Activated CD8-positive, alpha-beta memory T cell treated with anti-CD3 and anti-CD28 coated beads, Interleukin-2, amount 10 ng/mL, durations not matched to agents 7 days and 5 days (primary cell): ENCODE measurements at regions of chr16 and their contacts with region 1.

Region 1: DNA sequence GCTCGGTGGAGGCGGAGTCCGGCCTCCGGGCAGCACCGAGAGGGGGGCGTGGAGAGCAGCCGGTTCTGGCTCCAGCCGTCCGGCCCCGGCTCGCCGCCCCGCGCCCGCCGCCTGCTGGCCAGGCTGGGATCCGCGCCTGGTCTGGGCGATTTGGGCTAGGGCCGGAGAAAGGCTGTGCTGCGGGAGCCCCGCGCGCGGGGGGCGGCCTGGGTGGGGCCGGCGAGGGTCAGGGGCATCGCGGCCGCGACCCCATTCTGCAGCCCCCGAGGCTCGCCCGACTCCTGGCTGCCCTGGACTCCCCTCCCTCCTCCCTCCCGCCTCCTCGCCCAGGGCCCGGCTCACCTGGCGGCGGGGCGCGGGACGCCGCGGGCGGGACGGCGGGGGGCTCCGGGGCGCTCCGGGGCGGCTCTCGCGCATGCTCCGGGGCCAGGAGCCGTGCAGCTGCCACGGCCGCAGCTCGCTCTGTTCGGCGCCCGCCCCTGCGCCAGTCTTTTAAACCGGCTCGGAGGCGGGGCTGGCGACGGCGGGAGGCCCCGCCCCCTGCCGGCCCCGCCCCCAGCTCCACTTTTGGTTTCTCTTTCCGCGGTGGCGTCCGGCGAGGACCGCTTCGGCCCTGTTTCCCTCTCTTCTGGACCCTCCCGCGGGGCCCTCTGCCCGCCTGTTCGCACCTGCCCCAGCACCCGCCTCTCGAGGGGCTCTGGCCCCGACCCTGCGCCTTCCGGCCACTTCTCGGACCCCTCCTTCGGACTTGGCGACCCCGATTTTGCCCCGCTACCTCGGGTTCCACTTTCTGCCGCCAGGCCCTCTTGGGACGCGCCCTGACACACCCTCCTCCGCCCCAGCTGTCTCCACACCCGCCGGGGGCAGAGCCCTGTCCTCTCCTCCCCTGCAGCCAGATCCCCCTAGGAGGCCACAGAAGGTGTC is at the start of gene SOCS1:
- DNase-seq: peak; percentile 91
- ATAC-seq: peak; percentile 66
- H3K4me3 Mint-ChIP-seq: peak within 1 kb of the TSS; percentile 99
- H3K27ac Mint-ChIP-seq: peak within 1 kb of the TSS; percentile 95
- H3K4me1 Mint-ChIP-seq: peaks cover 41% of the 10 kb centered on the region
- H3K27me3 Mint-ChIP-seq: peaks cover 12% of the 10 kb centered on the region
- total RNA-seq, gene SOCS1: 158 to 200 TPM

Region 2: DNA sequence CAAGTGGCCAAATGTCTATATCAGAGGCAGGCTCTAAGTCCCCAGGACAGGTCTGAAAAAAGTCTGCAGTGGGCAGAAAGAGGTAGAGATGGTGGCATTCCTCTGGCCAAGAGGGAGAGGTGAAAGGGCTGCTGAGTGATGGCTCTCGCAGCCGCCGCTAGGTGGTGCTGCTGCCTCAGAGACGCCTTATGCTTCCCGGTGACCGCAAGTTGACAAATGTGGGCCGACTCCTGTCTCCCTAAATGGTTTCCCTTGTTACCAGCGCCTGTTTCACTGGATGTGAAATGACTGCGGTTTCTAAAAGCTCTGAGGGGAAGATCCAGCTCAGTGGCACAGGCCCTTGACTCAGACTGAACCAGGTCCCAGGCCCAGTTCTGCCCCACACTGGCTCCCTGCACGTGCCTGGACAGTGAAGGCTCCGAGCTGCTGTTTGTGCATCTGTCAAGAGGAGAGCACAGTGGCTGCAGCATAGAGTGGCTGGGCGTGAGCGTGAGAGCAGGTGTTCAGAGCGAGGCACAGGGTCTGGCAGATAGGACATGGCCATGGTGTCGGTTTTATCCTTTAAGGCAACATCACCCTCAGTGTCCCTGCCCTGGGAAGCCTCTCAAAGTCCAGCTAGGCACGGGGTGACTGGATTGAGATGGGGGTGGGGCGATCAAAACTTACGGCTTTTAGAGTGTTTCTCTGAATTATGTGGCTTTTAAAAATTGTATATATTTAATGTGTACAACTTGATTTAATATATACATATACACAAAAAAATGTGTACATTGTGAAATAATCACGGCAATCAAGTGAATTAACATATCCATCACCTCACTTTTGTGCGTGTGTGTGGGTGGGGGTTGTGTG is 291.7 kb before region 1 on chr16:
- CTCF ChIA-PET with region 1: interaction called, 257 read pairs
- DNase-seq: peak; percentile 89
- ATAC-seq: peak; percentile 63
- H3K4me3 Mint-ChIP-seq: peak overlapping the region; percentile 53
- H3K27ac Mint-ChIP-seq: peak overlapping the region; percentile 91
- H3K4me1 Mint-ChIP-seq: peaks cover 80% of the 10 kb centered on the region
- H3K27me3 Mint-ChIP-seq: no peaks in the 10 kb centered on the region

Region 3: GRCh38 chr16:11051879-11052808 is 203.9 kb before region 1 on chr16:
- CTCF ChIA-PET with region 1: interaction called, 36 read pairs
- DNase-seq: peak; percentile 97
- ATAC-seq: peak; percentile 79
- H3K4me3 Mint-ChIP-seq: peak overlapping the region; percentile 58
- H3K27ac Mint-ChIP-seq: peak overlapping the region; percentile 92
- H3K4me1 Mint-ChIP-seq: peaks cover 97% of the 10 kb centered on the region
- H3K27me3 Mint-ChIP-seq: no peaks in the 10 kb centered on the region

Region 4: DNA sequence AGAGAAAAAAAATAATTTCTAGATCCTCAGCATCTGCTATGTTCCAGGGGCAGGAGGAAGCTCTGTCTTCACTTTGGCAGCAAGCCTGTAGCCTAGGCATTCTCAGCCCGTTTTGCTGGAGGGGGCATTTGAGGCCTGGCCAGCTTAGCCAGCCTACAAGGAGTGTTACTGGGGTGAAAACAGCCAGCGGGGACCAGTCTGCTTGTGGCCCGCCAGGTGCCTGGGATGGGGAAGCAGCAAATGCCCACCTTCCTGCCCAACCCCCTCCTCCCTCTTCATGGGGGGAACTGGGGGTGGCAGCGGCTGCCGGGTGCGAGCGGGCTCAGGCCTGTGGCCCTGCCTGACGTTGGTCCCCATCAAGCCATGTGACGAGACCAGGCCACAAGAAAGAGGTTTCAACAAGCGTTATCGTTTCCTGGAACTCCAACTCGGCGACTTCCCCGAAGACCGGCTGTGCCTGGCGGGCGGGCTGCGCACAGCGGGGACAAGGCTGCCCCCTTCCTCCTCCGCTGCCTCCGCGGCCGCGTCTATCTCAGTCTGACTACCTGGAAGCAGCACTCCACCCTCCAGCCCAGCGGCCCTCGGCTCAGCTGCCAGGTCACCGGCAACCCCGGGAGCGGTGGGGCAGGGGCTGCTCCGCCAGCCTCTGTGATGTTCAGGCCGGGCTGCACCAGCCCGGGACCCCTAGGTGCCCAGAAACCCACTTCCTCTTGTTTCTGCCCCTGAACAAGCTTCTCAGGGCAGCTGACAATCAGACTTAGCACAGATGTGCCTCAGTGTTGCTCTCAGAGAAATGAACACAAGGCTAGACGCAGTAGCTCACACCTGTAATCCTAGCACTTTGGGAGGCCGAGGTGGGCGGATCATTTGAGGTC is 22.9 kb before region 1 on chr16:
- CTCF ChIA-PET with region 1: interaction called, 30 read pairs
- DNase-seq: peak; percentile 98
- ATAC-seq: peak; percentile 88
- H3K4me3 Mint-ChIP-seq: peak overlapping the region; percentile 63
- H3K27ac Mint-ChIP-seq: peak overlapping the region; percentile 96
- H3K4me1 Mint-ChIP-seq: peaks cover 79% of the 10 kb centered on the region
- H3K27me3 Mint-ChIP-seq: no peaks in the 10 kb centered on the region

Region 5: DNA sequence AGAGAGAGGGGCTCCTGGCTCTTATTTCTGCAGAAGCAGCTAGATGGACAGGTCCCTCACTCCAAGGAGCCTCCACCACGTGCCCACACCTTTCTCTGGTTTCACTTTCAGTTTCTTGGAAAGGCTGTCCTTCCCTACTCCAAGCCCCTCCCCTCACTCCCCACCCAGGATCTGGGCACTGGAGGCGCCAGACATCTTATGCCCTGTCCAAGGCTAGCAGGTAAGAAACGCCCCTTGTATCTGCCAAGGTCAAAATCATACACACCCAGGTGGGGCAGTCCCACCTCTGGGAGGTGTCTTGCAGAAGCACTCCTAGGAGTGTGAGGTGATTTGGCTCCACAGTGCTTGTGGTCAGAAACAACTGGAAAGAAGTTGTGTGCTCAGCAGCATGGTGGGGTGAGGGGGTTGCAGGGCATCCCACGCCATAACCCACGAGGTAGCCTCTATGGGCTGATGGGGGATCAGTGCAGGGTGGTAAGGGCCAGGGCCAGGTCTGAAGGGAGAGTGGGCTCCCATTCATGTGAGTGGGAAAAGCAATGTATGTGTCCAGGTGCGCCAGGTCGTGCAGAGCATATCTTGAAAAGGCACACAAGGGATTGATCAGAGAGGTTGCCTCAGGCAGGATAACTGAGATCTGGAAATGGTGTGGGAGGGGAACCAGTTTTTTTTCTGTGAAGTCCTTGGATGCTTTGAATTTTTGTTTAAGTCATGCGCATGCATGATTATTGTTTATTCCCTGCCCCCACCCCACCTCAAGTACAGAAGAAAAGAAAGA is 56.9 kb after region 1 on chr16:
- CTCF ChIA-PET with region 1: interaction called, 18 read pairs
- DNase-seq: peak; percentile 67
- ATAC-seq: peak; percentile 34
- H3K4me3 Mint-ChIP-seq: peak overlapping the region; percentile 8
- H3K27ac Mint-ChIP-seq: peak overlapping the region; percentile 81
- H3K4me1 Mint-ChIP-seq: peaks cover 65% of the 10 kb centered on the region
- H3K27me3 Mint-ChIP-seq: no peaks in the 10 kb centered on the region